ENCODE measurements at regions of chrX and their contacts with region 1.

Region 1: GRCh38 chrX:75096331-75096730 is 59.8 kb downstream of the ABCB7 start:
- DNase-seq: no peak
- ATAC-seq: no peak
- H3K4me3 ChIP-seq: no peak overlapping the region
- H3K27ac ChIP-seq: no peak overlapping the region
- H3K4me1 ChIP-seq: no peaks in the 10 kb centered on the region
- H3K27me3 ChIP-seq: no peaks in the 10 kb centered on the region
- CTCF ChIP-seq: no peak
- POLR2A ChIP-seq: no peak
- RAD21 ChIP-seq: no peak

Region 2: DNA sequence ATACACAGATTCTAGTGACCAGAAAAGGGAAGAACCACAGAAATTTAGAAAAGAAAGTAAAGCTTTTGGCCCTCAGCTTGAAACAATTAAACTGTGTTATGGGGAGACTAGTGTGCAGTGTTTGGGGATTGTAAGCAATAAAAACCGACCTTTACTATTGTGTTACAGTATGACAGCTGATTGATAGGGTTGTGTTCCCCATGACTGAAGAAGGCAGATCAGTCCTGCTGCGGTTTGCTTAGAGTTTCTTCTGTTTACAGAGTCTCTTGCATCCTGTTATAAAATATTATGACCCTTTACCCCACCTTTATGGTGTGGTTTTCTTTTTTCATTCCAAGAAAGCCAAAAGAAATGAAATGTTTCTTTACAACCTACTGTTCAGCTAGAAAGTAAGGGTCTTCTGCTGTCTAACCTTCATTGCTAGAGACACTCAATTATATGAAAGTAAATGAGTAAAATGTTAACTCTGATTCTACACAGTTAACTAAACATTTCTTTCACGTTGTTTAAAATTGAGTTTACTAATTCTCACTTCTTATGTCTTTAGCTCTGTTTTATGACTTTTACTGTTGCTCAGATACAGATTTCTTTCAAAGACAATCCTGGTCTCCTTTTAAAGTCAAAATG is 1515.2 kb before region 1 on chrX:
- CTCF ChIA-PET with region 1: no interaction called
- POLR2A ChIA-PET with region 1: no interaction called
- dilution Hi-C with region 1: no loop called
- in situ Hi-C with region 1: no loop called
- intact Hi-C with region 1: loop called (anchors 5 kb)
- DNase-seq: no peak
- ATAC-seq: no peak
- H3K4me3 ChIP-seq: no peak overlapping the region
- H3K27ac ChIP-seq: no peak overlapping the region
- H3K4me1 ChIP-seq: no peaks in the 10 kb centered on the region
- H3K27me3 ChIP-seq: no peaks in the 10 kb centered on the region
- CTCF ChIP-seq: no peak
- POLR2A ChIP-seq: no peak
- RAD21 ChIP-seq: no peak

Region 3: DNA sequence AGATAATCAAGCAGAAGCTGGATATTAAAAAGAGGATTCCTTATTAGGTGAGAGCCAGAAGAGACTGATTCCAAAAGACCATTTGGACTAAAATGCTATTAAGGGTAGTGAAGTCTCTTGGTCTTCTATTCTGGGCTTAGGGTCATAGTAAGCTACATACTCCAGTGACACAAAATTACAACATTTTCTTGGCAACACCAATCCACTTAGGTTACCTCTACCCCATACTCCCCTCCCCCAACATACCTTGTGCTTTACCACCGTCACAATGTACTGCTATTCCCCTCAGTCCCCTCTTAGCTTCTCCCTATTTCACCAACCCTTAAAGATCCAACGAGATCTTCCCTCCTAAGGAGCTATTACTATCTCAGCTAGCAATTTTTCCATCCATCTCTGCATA is 493.3 kb before region 1 on chrX:
- CTCF ChIA-PET with region 1: no interaction called
- POLR2A ChIA-PET with region 1: no interaction called
- dilution Hi-C with region 1: no loop called
- in situ Hi-C with region 1: no loop called
- intact Hi-C with region 1: no loop called
- DNase-seq: no peak
- ATAC-seq: no peak
- H3K4me3 ChIP-seq: no peak overlapping the region
- H3K27ac ChIP-seq: no peak overlapping the region
- H3K4me1 ChIP-seq: 0 out of 2 replicates have a peak, but pooled peaks cover 2% of the 10 kb centered on the region
- H3K27me3 ChIP-seq: no peaks in the 10 kb centered on the region
- CTCF ChIP-seq: no peak
- POLR2A ChIP-seq: no peak
- RAD21 ChIP-seq: no peak

Region 4: DNA sequence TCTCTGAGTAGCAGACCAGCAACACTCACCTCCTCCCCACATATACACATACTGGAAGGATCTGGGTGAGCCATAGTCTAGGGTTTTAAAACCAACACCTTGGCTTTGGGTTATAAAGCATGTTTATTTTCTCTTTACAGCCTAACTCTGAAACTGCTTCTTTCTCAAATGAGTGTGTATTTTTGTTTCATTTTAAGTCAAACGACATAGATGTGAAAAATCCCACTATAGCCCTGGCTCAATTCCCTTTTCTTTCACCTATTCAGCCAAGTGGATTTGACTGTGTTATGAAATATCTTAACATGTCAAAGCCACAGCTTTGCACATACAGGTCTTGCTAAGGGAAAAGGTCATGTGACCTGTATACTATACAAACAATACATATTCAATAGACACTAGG is 184.8 kb before region 1 on chrX:
- CTCF ChIA-PET with region 1: no interaction called
- POLR2A ChIA-PET with region 1: no interaction called
- dilution Hi-C with region 1: no loop called
- in situ Hi-C with region 1: no loop called
- intact Hi-C with region 1: no loop called
- DNase-seq: no peak
- ATAC-seq: no peak
- H3K4me3 ChIP-seq: no peak overlapping the region
- H3K27ac ChIP-seq: no peak overlapping the region
- H3K4me1 ChIP-seq: no peaks in the 10 kb centered on the region
- H3K27me3 ChIP-seq: no peaks in the 10 kb centered on the region
- CTCF ChIP-seq: no peak
- POLR2A ChIP-seq: no peak
- RAD21 ChIP-seq: no peak